Activated CD4-positive, alpha-beta T cell treated with anti-CD3 and anti-CD28 coated beads, Interleukin-2, amount 10 ng/mL, durations not matched to agents 24 days and 14 days (primary cell): ENCODE measurements at regions of chr1 and their contacts with region 1.

Region 1: GRCh38 chr1:211133836-211134669 is at the start of gene KCNH1:
- DNase-seq: peak; percentile 91
- H3K4me3 Mint-ChIP-seq: peak within 1 kb of the TSS; percentile 71
- H3K27ac Mint-ChIP-seq: no peak within 1 kb of the TSS
- H3K4me1 Mint-ChIP-seq: peaks cover 2% of the 10 kb centered on the region
- H3K27me3 Mint-ChIP-seq: peaks cover 75% of the 10 kb centered on the region
- total RNA-seq, gene KCNH1: not detected in 2 replicates

Region 2: GRCh38 chr1:210407207-210407886 is 726.7 kb before region 1 on chr1:
- intact Hi-C with region 1: loop called (anchors 1 kb)
- DNase-seq: peak; percentile 91
- H3K4me3 Mint-ChIP-seq: no peak overlapping the region
- H3K27ac Mint-ChIP-seq: no peak overlapping the region
- H3K4me1 Mint-ChIP-seq: no peaks in the 10 kb centered on the region
- H3K27me3 Mint-ChIP-seq: peaks cover 10% of the 10 kb centered on the region

Region 3: DNA sequence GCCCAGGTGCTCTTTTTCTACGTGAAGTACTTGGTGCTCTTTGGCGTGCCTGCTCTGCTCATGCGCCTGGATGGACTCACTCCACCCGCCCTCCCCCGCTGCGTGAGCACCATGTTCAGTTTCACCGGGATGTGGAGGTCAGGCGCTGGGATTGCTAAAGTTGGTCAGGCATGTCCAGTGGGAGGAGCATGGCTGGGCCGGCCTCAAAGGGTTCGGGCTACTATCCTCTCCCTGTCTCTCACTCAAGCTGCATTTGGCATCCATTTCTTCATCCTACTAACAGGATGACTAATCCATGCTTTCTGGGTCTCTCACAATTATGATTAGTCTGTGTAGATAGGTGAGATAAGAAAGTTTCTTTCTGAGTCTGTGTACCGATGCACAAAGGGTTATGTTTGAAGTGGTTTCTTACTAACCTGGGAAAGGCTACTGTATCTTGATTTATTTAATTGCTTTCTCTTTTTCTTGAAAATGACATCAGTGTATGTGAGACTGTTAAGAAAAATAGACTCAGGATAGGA is 669.5 kb before region 1 on chr1:
- intact Hi-C with region 1: loop called (anchors 1 kb)
- DNase-seq: no peak
- H3K4me3 Mint-ChIP-seq: no peak overlapping the region
- H3K27ac Mint-ChIP-seq: no peak overlapping the region
- H3K4me1 Mint-ChIP-seq: peaks cover 12% of the 10 kb centered on the region
- H3K27me3 Mint-ChIP-seq: peaks cover 7% of the 10 kb centered on the region

Region 4: GRCh38 chr1:210584439-210585113 is 549.5 kb before region 1 on chr1:
- intact Hi-C with region 1: loop called (anchors 1 kb)
- DNase-seq: peak; percentile 89
- H3K4me3 Mint-ChIP-seq: no peak overlapping the region
- H3K27ac Mint-ChIP-seq: no peak overlapping the region
- H3K4me1 Mint-ChIP-seq: no peaks in the 10 kb centered on the region
- H3K27me3 Mint-ChIP-seq: peaks cover 3% of the 10 kb centered on the region

Region 5: DNA sequence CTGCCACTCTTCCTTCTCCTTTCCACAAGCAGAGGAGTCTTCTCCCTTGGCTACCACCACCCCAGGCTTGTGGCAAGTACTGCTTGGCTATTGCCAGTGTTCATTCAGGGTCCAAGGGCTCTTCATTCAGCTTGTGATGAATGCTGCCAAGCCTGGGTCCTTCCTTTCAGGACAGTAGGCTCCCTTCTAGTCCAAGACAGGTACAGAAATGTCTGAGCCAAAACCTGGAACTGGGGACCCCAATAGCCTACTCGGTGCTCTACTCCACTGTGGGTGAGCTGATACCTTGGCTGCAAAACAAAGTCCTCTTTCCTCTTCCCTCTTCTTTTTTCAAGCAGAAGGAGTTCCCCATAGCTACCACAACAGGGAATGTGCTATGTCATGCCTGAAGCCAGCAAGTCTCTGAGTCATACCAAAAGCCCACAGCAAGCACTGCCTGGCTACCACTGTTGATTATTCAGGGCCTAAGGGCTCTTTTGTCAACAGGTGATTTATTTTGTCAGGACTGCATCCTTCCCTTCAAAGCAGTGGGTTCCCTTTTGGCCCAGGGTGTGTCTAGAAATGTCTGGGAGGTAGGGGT is 536.4 kb before region 1 on chr1:
- intact Hi-C with region 1: no loop called
- DNase-seq: no peak
- H3K4me3 Mint-ChIP-seq: no peak overlapping the region
- H3K27ac Mint-ChIP-seq: no peak overlapping the region
- H3K4me1 Mint-ChIP-seq: no peaks in the 10 kb centered on the region
- H3K27me3 Mint-ChIP-seq: peaks cover 2% of the 10 kb centered on the region

Region 6: GRCh38 chr1:211424018-211424417 is 290.0 kb after region 1 on chr1:
- intact Hi-C with region 1: no loop called
- DNase-seq: no peak
- H3K4me3 Mint-ChIP-seq: no peak overlapping the region
- H3K27ac Mint-ChIP-seq: no peak overlapping the region
- H3K4me1 Mint-ChIP-seq: peaks cover 9% of the 10 kb centered on the region
- H3K27me3 Mint-ChIP-seq: no peaks in the 10 kb centered on the region

Region 7: GRCh38 chr1:211476200-211476849 is 342.3 kb after region 1 on chr1:
- intact Hi-C with region 1: loop called (anchors 10 kb)
- DNase-seq: peak; percentile 93
- H3K4me3 Mint-ChIP-seq: no peak overlapping the region
- H3K27ac Mint-ChIP-seq: no peak overlapping the region
- H3K4me1 Mint-ChIP-seq: peaks cover 2% of the 10 kb centered on the region
- H3K27me3 Mint-ChIP-seq: peaks cover 22% of the 10 kb centered on the region